Naive thymus-derived CD4-positive, alpha-beta T cell (primary cell): ENCODE measurements at regions of chr11 and their contacts with region 1.

Region 1: GRCh38 chr11:67239783-67240575 is 26.3 kb upstream of the GRK2 start:
- DNase-seq: peak; percentile 81 to 99 (median 98)
- ATAC-seq: peak; percentile 94
- H3K4me3 ChIP-seq: peak overlapping the region; percentile 89
- H3K4me3 Mint-ChIP-seq: peak overlapping the region; percentile 93 to 100 (median 98)
- H3K27ac ChIP-seq: peak overlapping the region; percentile 97
- H3K27ac Mint-ChIP-seq: peak overlapping the region; percentile 92 to 100 (median 99)
- H3K4me1 ChIP-seq: peaks cover 24 to 41% of the 10 kb centered on the region in 2 donors
- H3K4me1 Mint-ChIP-seq: peaks cover 47 to 62% (median 61%) of the 10 kb centered on the region in 7 donors
- H3K27me3 ChIP-seq: no peaks in the 10 kb centered on the region
- H3K27me3 Mint-ChIP-seq: no peaks in the 10 kb centered on the region

Region 2: GRCh38 chr11:67082035-67082791 is 157.8 kb before region 1 on chr11:
- CTCF ChIA-PET with region 1: no interaction called
- POLR2A ChIA-PET with region 1: no interaction called
- intact Hi-C with region 1: loop called in 1 of 2 experiments (anchors 5 kb)
- DNase-seq: peak in 3 of 9 donors; percentile 5 to 13 (median 11)
- ATAC-seq: no peak
- H3K4me3 ChIP-seq: no peak overlapping the region
- H3K4me3 Mint-ChIP-seq: peak overlapping the region; percentile 12 to 70 (median 60)
- H3K27ac ChIP-seq: no peak overlapping the region
- H3K27ac Mint-ChIP-seq: peak overlapping the region in 3 of 9 donors; percentile 15 to 72 (median 17)
- H3K4me1 ChIP-seq: peaks cover 7 to 10% of the 10 kb centered on the region in 2 donors
- H3K4me1 Mint-ChIP-seq: peaks cover 5 to 22% (median 15%) of the 10 kb centered on the region in 7 donors
- H3K27me3 ChIP-seq: no peaks in the 10 kb centered on the region
- H3K27me3 Mint-ChIP-seq: peaks cover 0 to 5% (median 0%) of the 10 kb centered on the region in 5 donors

Region 3: GRCh38 chr11:67118801-67119584 is 121.0 kb before region 1 on chr11 and contains the start of gene KDM2A:
- CTCF ChIA-PET with region 1: interaction called, 3 read pairs
- POLR2A ChIA-PET with region 1: interaction called, 10 read pairs
- intact Hi-C with region 1: loop called (anchors 1 kb)
- DNase-seq: peak; percentile 93 to 100 (median 98)
- ATAC-seq: peak; percentile 92
- H3K4me3 ChIP-seq: peak within 1 kb of the TSS; percentile 86
- H3K4me3 Mint-ChIP-seq: peak within 1 kb of the TSS; percentile 95 to 99 (median 98)
- H3K27ac ChIP-seq: peak within 1 kb of the TSS; percentile 98
- H3K27ac Mint-ChIP-seq: peak within 1 kb of the TSS; percentile 84 to 98 (median 95)
- H3K4me1 ChIP-seq: peaks cover 3 to 7% of the 10 kb centered on the region in 2 donors
- H3K4me1 Mint-ChIP-seq: peaks cover 25 to 48% (median 40%) of the 10 kb centered on the region in 7 donors
- H3K27me3 ChIP-seq: no peaks in the 10 kb centered on the region
- H3K27me3 Mint-ChIP-seq: peaks cover 0 to 5% (median 0%) of the 10 kb centered on the region in 5 donors
- total RNA-seq, gene KDM2A: 146 to 298 (median 233) TPM

Region 4: GRCh38 chr11:67158221-67158620 is 81.8 kb before region 1 on chr11:
- CTCF ChIA-PET with region 1: no interaction called
- POLR2A ChIA-PET with region 1: no interaction called
- intact Hi-C with region 1: no loop called
- DNase-seq: no peak
- ATAC-seq: no peak
- H3K4me3 ChIP-seq: no peak overlapping the region
- H3K4me3 Mint-ChIP-seq: no peak overlapping the region
- H3K27ac ChIP-seq: no peak overlapping the region
- H3K27ac Mint-ChIP-seq: peak overlapping the region in 7 of 9 donors; percentile 1 to 77 (median 24)
- H3K4me1 ChIP-seq: peaks cover 0 to 6% of the 10 kb centered on the region in 2 donors
- H3K4me1 Mint-ChIP-seq: peaks cover 22 to 54% (median 48%) of the 10 kb centered on the region in 7 donors
- H3K27me3 ChIP-seq: no peaks in the 10 kb centered on the region
- H3K27me3 Mint-ChIP-seq: no peaks in the 10 kb centered on the region

Region 5: DNA sequence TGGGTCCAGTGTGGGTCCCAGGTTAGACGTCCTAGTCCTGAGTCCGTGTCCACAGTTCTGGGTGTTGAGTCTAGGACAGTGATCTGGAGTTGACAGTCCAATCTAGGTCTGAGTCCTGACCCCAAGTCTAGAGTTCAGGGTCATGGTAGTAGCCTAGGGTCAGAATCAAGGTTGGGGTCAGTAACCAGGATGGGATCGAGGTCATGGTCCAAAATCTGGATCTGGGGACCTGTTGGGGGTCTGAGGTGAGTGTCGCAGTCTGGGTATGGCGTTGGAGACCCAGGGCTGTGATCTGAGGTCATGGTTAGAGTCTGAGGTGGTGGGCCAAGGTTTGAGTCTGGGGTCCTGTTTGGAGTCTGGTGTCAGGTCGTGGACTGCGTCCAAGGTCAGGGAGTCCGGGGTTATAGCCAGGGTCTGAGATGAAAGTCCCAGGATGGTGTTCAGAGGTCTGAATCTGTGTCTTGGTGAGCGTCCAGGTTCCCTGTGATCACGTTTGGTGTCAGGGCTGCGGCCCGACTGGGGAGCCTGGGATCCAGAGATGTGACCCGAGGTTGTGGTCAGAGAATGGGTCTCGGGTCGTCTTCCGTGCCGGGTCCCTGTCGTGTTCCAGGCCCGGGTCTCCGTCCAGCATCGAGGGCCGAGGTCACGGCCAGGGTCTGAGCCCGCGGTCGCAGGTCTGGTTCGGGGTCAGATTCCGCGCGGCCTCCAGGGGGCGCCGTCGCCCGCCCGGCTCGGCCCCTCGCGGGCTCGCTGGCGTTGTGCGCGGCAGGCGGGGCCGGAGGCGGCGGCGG is 25.8 kb after region 1 on chr11:
- CTCF ChIA-PET with region 1: interaction called, 23 read pairs
- POLR2A ChIA-PET with region 1: interaction called, 28 read pairs
- intact Hi-C with region 1: loop called in 1 of 2 experiments (anchors 1 kb)
- DNase-seq: peak; percentile 50 to 91 (median 78)
- ATAC-seq: peak; percentile 76
- H3K4me3 ChIP-seq: peak overlapping the region; percentile 25
- H3K4me3 Mint-ChIP-seq: peak overlapping the region; percentile 75 to 99 (median 84)
- H3K27ac ChIP-seq: peak overlapping the region; percentile 65
- H3K27ac Mint-ChIP-seq: peak overlapping the region; percentile 72 to 94 (median 81)
- H3K4me1 ChIP-seq: peaks cover 42 to 56% of the 10 kb centered on the region in 2 donors
- H3K4me1 Mint-ChIP-seq: peaks cover 22 to 77% (median 65%) of the 10 kb centered on the region in 7 donors
- H3K27me3 ChIP-seq: no peaks in the 10 kb centered on the region
- H3K27me3 Mint-ChIP-seq: no peaks in the 10 kb centered on the region

Region 6: DNA sequence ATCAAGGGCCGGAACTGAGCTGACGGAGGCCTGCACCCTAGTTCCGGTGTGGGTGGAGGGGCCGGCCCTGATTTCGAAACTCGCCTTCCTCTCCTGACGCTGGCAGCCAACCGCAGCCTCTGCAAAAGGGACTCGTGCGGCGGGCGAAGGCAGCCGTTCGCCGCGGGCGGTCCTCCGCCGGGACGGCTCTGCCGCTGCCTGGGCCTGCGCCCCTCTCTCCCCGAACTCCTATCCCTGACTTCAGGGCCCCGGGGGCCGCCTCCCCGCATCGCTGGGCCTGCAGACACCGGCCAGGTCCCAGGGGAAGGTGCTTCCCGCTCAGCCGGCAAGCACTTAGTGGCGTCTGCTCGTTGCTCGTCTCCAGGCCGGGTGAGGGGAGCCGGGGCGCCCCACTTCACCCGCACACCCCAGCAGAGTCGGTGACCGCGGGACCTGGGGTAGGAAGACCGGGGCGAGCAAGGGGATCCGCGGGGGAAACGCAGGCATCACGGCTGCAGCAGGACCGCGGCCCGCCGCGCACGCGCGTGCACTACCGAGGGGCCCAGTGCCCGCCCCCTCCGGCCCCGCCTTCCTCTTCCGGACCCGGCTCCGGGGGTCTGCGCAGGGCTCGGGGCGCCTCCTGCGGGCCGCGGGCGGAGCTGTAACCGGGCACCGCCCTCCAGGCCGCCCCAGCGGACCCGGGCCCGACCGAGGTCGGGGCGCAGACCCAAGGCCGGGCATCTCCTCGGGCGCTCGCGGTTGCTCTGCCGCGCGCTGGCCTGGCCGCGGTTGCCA is 48.7 kb after region 1 on chr11:
- CTCF ChIA-PET with region 1: interaction called, 5 read pairs
- POLR2A ChIA-PET with region 1: interaction called, 31 read pairs
- intact Hi-C with region 1: loop called in 1 of 2 experiments (anchors 1 kb)
- DNase-seq: peak; percentile 84 to 94 (median 91)
- ATAC-seq: peak; percentile 82
- H3K4me3 ChIP-seq: peak overlapping the region; percentile 95
- H3K4me3 Mint-ChIP-seq: peak overlapping the region; percentile 76 to 98 (median 85)
- H3K27ac ChIP-seq: peak overlapping the region; percentile 81
- H3K27ac Mint-ChIP-seq: peak overlapping the region; percentile 95 to 99 (median 97)
- H3K4me1 ChIP-seq: peaks cover 54 to 60% of the 10 kb centered on the region in 2 donors
- H3K4me1 Mint-ChIP-seq: peaks cover 29 to 73% (median 57%) of the 10 kb centered on the region in 7 donors
- H3K27me3 ChIP-seq: no peaks in the 10 kb centered on the region
- H3K27me3 Mint-ChIP-seq: peaks cover 0 to 2% (median 0%) of the 10 kb centered on the region in 5 donors

Region 7: DNA sequence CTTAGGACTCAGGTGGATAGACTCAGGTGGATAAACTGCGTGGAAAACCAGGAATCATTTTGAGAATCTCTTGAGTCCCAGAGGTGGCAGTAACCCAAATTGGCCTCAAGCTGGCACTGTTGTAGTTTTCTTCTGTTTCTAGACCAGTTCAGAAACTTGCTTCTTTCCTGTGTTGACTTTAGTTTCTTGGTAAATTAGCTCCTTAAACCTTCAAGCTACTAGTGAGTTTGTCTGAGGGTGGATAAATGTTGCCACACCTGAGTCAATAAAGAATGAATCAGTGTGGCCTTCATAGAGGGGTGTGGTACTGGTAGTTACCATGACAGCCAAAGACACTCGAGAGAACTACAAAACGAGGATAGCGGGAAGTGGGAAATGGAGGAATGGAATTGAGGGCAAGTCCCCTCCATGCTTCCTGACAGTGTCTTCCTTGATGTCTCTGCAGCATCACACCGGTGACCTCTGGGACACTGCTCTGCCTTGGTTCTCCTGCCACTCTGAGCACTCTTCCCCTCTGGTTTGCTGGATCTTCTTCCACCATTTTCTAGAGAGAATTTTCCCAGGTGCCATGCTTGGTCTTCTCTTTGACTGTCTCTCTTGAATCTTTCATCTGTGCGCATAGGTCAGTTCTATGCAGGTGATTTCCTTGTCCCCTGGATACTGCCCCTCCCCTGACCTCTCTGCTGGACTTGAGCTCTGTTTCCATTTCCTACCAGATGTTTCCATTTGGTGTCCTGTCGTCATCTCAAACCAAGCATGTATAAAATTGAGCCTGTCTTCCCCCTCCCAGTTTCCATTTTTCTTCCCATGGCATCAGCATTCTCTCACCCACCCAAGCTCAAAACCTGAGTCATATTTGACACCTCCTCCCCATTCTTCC is 106.2 kb after region 1 on chr11:
- CTCF ChIA-PET with region 1: interaction called, 7 read pairs
- POLR2A ChIA-PET with region 1: interaction called, 27 read pairs
- intact Hi-C with region 1: no loop called
- DNase-seq: peak in 5 of 9 donors; percentile 34 to 62 (median 52)
- ATAC-seq: peak; percentile 76
- H3K4me3 ChIP-seq: no peak overlapping the region
- H3K4me3 Mint-ChIP-seq: peak overlapping the region; percentile 30 to 74 (median 56)
- H3K27ac ChIP-seq: peak overlapping the region; percentile 68
- H3K27ac Mint-ChIP-seq: peak overlapping the region; percentile 61 to 98 (median 92)
- H3K4me1 ChIP-seq: peaks cover 5 to 38% of the 10 kb centered on the region in 2 donors
- H3K4me1 Mint-ChIP-seq: peaks cover 27 to 70% (median 60%) of the 10 kb centered on the region in 7 donors
- H3K27me3 ChIP-seq: no peaks in the 10 kb centered on the region
- H3K27me3 Mint-ChIP-seq: no peaks in the 10 kb centered on the region